CD8-positive, alpha-beta memory T cell (primary cell): ENCODE measurements at regions of chr1 and their contacts with region 1.

Region 1: GRCh38 chr1:74767490-74767889 is 34.5 kb downstream of the TYW3 start:
- DNase-seq: no peak
- H3K4me3 ChIP-seq: no peak overlapping the region
- H3K4me3 Mint-ChIP-seq: no peak overlapping the region
- H3K27ac ChIP-seq: no peak overlapping the region
- H3K27ac Mint-ChIP-seq: no peak overlapping the region
- H3K4me1 ChIP-seq: no peaks in the 10 kb centered on the region
- H3K4me1 Mint-ChIP-seq: peaks cover 3 to 15% (median 13%) of the 10 kb centered on the region in 3 donors
- H3K27me3 ChIP-seq: no peaks in the 10 kb centered on the region
- H3K27me3 Mint-ChIP-seq: no peaks in the 10 kb centered on the region

Region 2: DNA sequence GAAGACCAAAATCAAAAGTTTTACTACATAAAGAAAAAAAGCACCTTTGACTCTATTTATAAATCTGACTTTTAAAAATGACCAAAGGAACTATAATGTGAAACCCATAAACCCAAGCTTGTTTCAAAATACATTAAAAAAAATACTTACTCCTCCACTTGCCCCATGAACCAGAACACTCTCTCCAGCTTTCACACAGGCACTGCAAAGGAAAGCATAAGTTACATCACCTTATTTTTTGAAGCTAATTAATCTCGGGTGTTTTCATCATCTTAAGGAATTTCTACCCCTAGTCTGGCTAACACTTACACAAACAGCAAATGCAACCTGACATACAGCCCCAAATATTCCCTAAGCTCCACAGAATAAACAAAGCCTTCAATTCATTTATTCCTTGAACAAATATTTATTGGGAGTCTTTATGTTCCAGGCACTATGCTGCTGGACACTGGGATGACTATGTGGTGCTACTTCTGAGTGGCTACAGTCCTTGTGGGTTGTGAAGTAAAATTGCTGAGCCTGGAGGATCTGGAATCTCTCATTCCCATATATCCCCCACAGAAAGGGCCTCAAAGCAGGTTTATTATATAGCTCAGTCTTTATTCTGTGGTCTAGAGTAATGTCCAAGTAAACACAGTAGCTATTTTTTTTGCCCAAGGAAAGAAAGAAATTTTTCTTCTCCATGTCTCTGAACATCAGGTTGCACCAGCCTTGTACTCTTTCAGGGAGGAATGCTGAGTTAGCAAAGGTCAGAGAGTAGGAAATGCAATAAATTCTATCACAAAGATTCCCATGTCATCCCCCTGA is 52.9 kb before region 1 on chr1:
- CTCF ChIA-PET with region 1: no interaction called
- POLR2A ChIA-PET with region 1: no interaction called
- DNase-seq: no peak
- H3K4me3 ChIP-seq: no peak overlapping the region
- H3K4me3 Mint-ChIP-seq: no peak overlapping the region
- H3K27ac ChIP-seq: no peak overlapping the region
- H3K27ac Mint-ChIP-seq: peak overlapping the region in 1 of 8 donors; percentile 9
- H3K4me1 ChIP-seq: no peaks in the 10 kb centered on the region
- H3K4me1 Mint-ChIP-seq: peaks cover 0 to 7% (median 0%) of the 10 kb centered on the region in 3 donors
- H3K27me3 ChIP-seq: no peaks in the 10 kb centered on the region
- H3K27me3 Mint-ChIP-seq: no peaks in the 10 kb centered on the region

Region 3: GRCh38 chr1:74731399-74732052 is 36.0 kb before region 1 on chr1:
- CTCF ChIA-PET with region 1: interaction called, 4 read pairs
- POLR2A ChIA-PET with region 1: interaction called, 10 read pairs
- DNase-seq: no peak
- H3K4me3 ChIP-seq: no peak overlapping the region
- H3K4me3 Mint-ChIP-seq: peak overlapping the region; percentile 46 to 89 (median 62)
- H3K27ac ChIP-seq: peak overlapping the region; percentile 2
- H3K27ac Mint-ChIP-seq: peak overlapping the region; percentile 9 to 90 (median 70)
- H3K4me1 ChIP-seq: peaks cover 22% of the 10 kb centered on the region
- H3K4me1 Mint-ChIP-seq: peaks cover 48 to 59% (median 58%) of the 10 kb centered on the region in 3 donors
- H3K27me3 ChIP-seq: no peaks in the 10 kb centered on the region
- H3K27me3 Mint-ChIP-seq: no peaks in the 10 kb centered on the region